Natural killer cell (primary cell): ENCODE measurements at regions of chr2 and their contacts with region 1.

Region 1: DNA sequence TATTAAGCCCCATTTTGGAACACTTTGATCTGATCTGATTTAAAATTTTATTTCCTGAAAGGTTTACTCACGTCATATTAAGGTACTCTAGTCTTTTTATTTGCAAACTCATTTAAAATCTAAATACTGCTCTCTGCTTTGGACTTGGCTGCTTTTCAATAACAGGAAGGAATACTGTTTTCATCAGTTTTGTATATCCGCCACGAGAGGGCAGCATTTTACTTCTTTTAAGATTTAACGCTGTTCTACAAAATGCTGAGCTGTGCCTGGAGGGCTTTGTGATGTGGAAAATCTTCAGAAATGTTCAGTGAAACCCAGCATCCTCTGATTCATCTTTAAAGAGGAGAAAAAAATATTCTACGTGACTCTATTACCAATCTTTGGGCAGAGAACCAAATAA is 37.5 kb upstream of the SLC38A11 start:
- DNase-seq: peak in 1 of 2 donors; percentile 75
- ATAC-seq: peak in 2 of 3 donors; percentile 65 to 66
- H3K4me3 ChIP-seq: no peak overlapping the region
- H3K4me3 Mint-ChIP-seq: peak overlapping the region; percentile 72
- H3K27ac ChIP-seq: no peak overlapping the region
- H3K27ac Mint-ChIP-seq: peak overlapping the region; percentile 73 to 78
- H3K4me1 ChIP-seq: peaks cover 22% of the 10 kb centered on the region
- H3K4me1 Mint-ChIP-seq: peaks cover 44 to 45% of the 10 kb centered on the region in 2 donors
- H3K27me3 ChIP-seq: no peaks in the 10 kb centered on the region
- H3K27me3 Mint-ChIP-seq: no peaks in the 10 kb centered on the region
- CTCF ChIP-seq: peak; percentile 62

Region 2: GRCh38 chr2:165032559-165032958 is 39.7 kb after region 1 on chr2:
- intact Hi-C with region 1: loop called (anchors 1 kb)
- DNase-seq: no peak
- ATAC-seq: no peak
- H3K4me3 ChIP-seq: no peak overlapping the region
- H3K4me3 Mint-ChIP-seq: no peak overlapping the region
- H3K27ac ChIP-seq: no peak overlapping the region
- H3K27ac Mint-ChIP-seq: no peak overlapping the region
- H3K4me1 ChIP-seq: no peaks in the 10 kb centered on the region
- H3K4me1 Mint-ChIP-seq: no peaks in the 10 kb centered on the region
- H3K27me3 ChIP-seq: no peaks in the 10 kb centered on the region
- H3K27me3 Mint-ChIP-seq: no peaks in the 10 kb centered on the region
- CTCF ChIP-seq: no peak

Region 3: GRCh38 chr2:165120740-165121467 is 128.1 kb after region 1 on chr2:
- intact Hi-C with region 1: no loop called
- DNase-seq: no peak
- ATAC-seq: no peak
- H3K4me3 ChIP-seq: no peak overlapping the region
- H3K4me3 Mint-ChIP-seq: no peak overlapping the region
- H3K27ac ChIP-seq: no peak overlapping the region
- H3K27ac Mint-ChIP-seq: no peak overlapping the region
- H3K4me1 ChIP-seq: no peaks in the 10 kb centered on the region
- H3K4me1 Mint-ChIP-seq: no peaks in the 10 kb centered on the region
- H3K27me3 ChIP-seq: no peaks in the 10 kb centered on the region
- H3K27me3 Mint-ChIP-seq: no peaks in the 10 kb centered on the region
- CTCF ChIP-seq: no peak

Region 4: DNA sequence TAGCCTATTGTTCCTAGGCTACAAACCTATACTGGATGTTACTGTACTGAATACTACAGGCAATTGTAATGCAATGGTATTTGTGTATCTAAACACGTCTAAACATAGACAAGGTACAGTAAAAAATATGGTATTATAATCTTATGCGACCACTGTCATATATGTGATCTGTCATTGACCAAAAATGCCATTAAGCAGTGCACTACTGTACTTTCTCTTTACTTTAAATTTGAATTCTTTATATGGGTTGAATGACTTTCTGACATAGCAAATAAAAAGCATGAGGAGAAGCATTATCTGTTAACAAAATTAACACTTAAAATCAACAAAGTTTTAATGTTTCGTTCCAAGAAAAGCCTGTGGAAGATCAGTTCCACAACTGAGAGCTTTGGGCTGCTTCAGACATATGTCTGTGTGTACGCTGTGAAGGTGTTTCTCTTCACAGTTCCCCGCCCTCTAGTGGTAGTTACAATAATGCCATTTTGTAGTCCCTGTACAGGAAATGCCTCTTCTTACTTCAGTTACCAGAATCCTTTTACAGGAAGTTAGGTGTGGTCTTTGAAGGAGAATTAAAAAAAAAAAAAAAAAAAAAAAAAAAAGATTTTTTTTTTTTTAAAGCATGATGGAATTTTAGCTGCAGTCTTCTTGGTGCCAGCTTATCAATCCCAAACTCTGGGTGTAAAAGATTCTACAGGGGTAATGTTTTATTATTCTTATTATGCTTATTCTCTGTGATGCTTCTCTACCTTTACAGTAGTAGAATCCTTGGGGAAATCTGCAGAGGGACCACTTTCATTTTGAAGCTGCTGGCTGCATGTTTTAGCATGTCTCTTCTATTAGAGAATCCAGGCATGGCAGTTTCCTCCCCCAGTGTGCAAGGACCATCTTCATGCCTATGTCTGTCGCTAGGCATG is 300.9 kb after region 1 on chr2:
- intact Hi-C with region 1: loop called (anchors 1 kb)
- DNase-seq: peak in 1 of 2 donors; percentile 90
- ATAC-seq: peak; percentile 99 to 100 (median 100)
- H3K4me3 ChIP-seq: no peak overlapping the region
- H3K4me3 Mint-ChIP-seq: no peak overlapping the region
- H3K27ac ChIP-seq: no peak overlapping the region
- H3K27ac Mint-ChIP-seq: no peak overlapping the region
- H3K4me1 ChIP-seq: no peaks in the 10 kb centered on the region
- H3K4me1 Mint-ChIP-seq: no peaks in the 10 kb centered on the region
- H3K27me3 ChIP-seq: peaks cover 7% of the 10 kb centered on the region
- H3K27me3 Mint-ChIP-seq: peaks cover 13 to 17% of the 10 kb centered on the region in 2 donors
- CTCF ChIP-seq: peak; percentile 71

Region 5: GRCh38 chr2:165698444-165698894 is 705.7 kb after region 1 on chr2:
- intact Hi-C with region 1: loop called (anchors 10 kb)
- DNase-seq: peak in 1 of 2 donors; percentile 13
- ATAC-seq: peak in 2 of 3 donors; percentile 47 to 78
- H3K4me3 ChIP-seq: no peak overlapping the region
- H3K4me3 Mint-ChIP-seq: no peak overlapping the region
- H3K27ac ChIP-seq: no peak overlapping the region
- H3K27ac Mint-ChIP-seq: no peak overlapping the region
- H3K4me1 ChIP-seq: no peaks in the 10 kb centered on the region
- H3K4me1 Mint-ChIP-seq: no peaks in the 10 kb centered on the region
- H3K27me3 ChIP-seq: no peaks in the 10 kb centered on the region
- H3K27me3 Mint-ChIP-seq: peaks cover 2 to 19% of the 10 kb centered on the region in 2 donors
- CTCF ChIP-seq: no peak

Region 6: DNA sequence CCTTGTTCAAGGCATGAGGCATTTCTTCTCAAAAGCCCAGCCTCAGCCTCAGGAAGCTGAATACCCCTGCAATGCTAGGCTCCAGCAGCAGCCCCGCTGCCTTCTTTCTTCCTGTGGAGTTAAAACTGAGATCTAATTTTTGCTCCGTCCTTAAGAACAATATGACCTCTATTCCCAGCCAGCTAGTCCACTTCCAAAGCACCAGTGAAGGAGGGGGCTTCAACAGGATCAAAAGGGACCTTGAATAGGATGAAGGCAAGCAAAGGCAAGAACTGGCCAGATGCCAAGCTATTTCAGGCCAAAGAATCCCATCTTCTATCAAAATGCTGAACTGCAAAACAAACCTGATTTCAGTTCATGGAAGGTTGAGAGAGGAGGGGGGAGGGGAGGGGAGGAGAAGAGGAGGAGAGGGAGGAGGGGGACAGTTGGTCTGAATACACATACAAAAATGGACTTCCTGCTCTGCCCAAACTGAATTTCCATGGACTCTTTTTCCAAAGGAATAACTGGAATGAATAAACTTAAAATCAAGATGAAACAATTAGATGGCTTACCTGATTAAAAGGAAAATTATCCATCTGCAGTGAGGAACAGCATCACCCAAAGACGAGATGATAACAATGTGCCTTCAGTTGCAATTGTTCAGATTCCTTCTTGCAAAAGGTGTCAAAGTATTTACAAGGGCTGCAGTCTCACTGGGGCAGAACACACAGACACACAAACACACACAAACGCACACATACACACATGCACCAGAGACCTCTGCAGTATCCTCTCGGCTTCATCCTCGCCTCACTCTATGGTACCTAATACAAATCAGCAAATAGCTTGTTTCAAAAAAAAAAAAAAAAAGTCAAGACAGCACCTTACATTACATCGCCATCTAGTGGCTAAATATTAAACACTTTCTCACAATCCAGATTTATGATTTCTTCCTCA is 1134.7 kb after region 1 on chr2 and contains the start of gene SCN1A:
- intact Hi-C with region 1: loop called (anchors 5 kb)
- DNase-seq: peak in 1 of 2 donors; percentile 55
- ATAC-seq: peak in 1 of 3 donors; percentile 39
- H3K4me3 ChIP-seq: no peak within 1 kb of the TSS
- H3K4me3 Mint-ChIP-seq: no peak within 1 kb of the TSS
- H3K27ac ChIP-seq: no peak within 1 kb of the TSS
- H3K27ac Mint-ChIP-seq: no peak within 1 kb of the TSS
- H3K4me1 ChIP-seq: no peaks in the 10 kb centered on the region
- H3K4me1 Mint-ChIP-seq: peaks cover 0 to 5% of the 10 kb centered on the region in 2 donors
- H3K27me3 ChIP-seq: no peaks in the 10 kb centered on the region
- H3K27me3 Mint-ChIP-seq: peaks cover 8 to 24% of the 10 kb centered on the region in 2 donors
- CTCF ChIP-seq: peak; percentile 73
- total RNA-seq, gene SCN1A: not detected